ENCODE measurements at regions of chr1 and their contacts with region 1.

Region 1: GRCh38 chr1:208238710-208239472 is 5.3 kb downstream of the PLXNA2 start:
- DNase-seq: peak; percentile 42 to 58
- ATAC-seq: peak; percentile 48 to 78; a peak in 3 of 6 replicates
- H3K4me3 ChIP-seq: no peak overlapping the region
- H3K27ac ChIP-seq: peak overlapping the region; percentile 15 to 31; a peak in 2 of 6 replicates
- H3K4me1 ChIP-seq: peaks cover 23% of the 10 kb centered on the region
- CTCF ChIP-seq: peak; percentile 60
- EP300 ChIP-seq: no peak
- POLR2A ChIP-seq: no peak
- RAD21 ChIP-seq: peak; percentile 67 to 69

Region 2: DNA sequence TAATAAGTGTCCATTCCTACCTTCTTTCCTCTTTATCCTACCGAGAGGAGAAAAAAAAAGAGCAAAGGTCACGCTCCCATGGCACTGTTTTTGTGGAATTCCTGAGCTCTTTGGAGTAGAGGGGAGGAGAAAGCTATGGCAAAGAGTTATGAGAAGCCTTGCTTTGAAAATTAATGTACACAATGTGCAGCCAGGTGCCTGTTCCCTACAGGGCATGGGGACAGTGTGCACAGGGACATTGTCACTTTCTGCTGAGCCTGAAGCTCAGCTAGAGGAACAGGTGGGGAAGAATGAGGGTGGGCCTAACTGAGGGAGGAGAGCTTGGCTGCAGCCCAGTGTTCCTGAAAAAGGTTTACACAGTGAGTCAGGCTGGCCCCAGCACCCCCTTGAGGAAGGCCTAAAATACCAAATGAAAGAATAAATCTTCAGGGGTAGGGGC is 60.8 kb before region 1 on chr1:
- CTCF ChIA-PET with region 1: interaction called, 26 read pairs
- POLR2A ChIA-PET with region 1: no interaction called
- DNase-seq: no peak
- ATAC-seq: peak; percentile 19 to 29; a peak in 2 of 6 replicates
- H3K4me3 ChIP-seq: no peak overlapping the region
- H3K27ac ChIP-seq: peak overlapping the region; percentile 49 to 63; a peak in 2 of 6 replicates
- H3K4me1 ChIP-seq: peaks cover 73% of the 10 kb centered on the region
- CTCF ChIP-seq: no peak
- EP300 ChIP-seq: no peak
- POLR2A ChIP-seq: no peak
- RAD21 ChIP-seq: no peak

Region 3: DNA sequence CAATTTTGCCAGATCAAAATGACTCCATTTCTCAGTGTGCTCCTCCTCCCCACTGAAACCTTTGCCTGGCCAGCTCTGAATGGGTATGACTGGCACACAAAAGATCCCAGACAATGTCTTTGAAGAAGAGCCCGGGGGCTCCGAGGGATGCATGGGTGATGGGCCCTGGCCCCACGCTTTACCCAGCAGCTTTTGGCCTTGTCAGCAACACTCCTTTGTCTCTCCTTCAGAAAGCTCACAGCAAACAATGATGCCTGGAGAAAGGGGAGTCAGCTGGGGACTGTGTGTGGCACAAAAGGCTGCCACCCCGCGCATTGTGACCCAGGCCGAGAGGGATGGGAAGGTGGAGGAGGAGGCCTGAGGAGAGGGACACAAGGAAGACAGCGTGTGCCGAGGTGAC is 40.7 kb before region 1 on chr1:
- CTCF ChIA-PET with region 1: interaction called, 65 read pairs
- POLR2A ChIA-PET with region 1: no interaction called
- DNase-seq: no peak
- ATAC-seq: no peak
- H3K4me3 ChIP-seq: no peak overlapping the region
- H3K27ac ChIP-seq: no peak overlapping the region
- H3K4me1 ChIP-seq: peaks cover 32% of the 10 kb centered on the region
- CTCF ChIP-seq: no peak
- EP300 ChIP-seq: no peak
- POLR2A ChIP-seq: no peak
- RAD21 ChIP-seq: no peak

Region 4: DNA sequence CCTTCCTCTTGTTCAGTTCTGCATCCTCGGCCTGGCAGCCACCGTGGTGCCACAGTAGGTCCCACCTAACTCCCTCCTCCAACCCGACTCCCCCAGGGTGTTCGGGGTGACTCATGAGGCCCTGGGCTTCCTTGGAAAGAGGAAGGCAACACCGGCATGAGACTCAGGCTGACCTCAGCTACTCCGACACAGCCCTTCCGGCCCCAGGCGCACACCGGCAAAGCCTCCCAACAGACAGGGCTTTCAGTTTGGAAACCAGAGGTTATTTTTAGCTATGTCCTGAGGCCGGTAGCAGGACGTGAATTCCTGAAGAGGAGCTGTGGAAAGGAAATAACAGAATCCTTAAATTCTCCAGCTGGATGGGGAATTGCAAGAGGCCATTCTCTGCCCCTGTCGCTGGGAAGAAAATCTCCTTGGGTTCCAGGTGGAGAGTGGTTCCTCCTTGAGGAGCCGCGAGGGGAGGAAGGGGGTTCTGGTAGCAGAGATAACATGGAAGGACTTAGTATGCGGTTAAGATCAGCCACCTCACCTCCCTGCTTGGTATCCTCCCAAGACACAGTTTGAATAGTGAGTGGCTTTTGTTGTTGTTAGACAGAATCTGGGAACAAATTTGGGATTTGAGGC is 19.1 kb before region 1 on chr1:
- CTCF ChIA-PET with region 1: interaction called, 26 read pairs
- POLR2A ChIA-PET with region 1: no interaction called
- DNase-seq: no peak
- ATAC-seq: peak in 1 of 2 experiments; percentile 17; a peak in 1 of 6 replicates
- H3K4me3 ChIP-seq: no peak overlapping the region
- H3K27ac ChIP-seq: peak overlapping the region; percentile 25 to 59; a peak in 3 of 6 replicates
- H3K4me1 ChIP-seq: peaks cover 22% of the 10 kb centered on the region
- CTCF ChIP-seq: no peak
- EP300 ChIP-seq: no peak
- POLR2A ChIP-seq: no peak
- RAD21 ChIP-seq: no peak

Region 5: GRCh38 chr1:208497866-208498541 is 259.1 kb after region 1 on chr1:
- CTCF ChIA-PET with region 1: no interaction called
- POLR2A ChIA-PET with region 1: no interaction called
- DNase-seq: no peak
- ATAC-seq: no peak
- H3K4me3 ChIP-seq: no peak overlapping the region
- H3K27ac ChIP-seq: no peak overlapping the region
- H3K4me1 ChIP-seq: no peaks in the 10 kb centered on the region
- CTCF ChIP-seq: no peak
- EP300 ChIP-seq: no peak
- POLR2A ChIP-seq: no peak
- RAD21 ChIP-seq: no peak